Left colon (tissue), 2 donors: ENCODE measurements at regions of chr5 and their contacts with region 1.

Region 1: DNA sequence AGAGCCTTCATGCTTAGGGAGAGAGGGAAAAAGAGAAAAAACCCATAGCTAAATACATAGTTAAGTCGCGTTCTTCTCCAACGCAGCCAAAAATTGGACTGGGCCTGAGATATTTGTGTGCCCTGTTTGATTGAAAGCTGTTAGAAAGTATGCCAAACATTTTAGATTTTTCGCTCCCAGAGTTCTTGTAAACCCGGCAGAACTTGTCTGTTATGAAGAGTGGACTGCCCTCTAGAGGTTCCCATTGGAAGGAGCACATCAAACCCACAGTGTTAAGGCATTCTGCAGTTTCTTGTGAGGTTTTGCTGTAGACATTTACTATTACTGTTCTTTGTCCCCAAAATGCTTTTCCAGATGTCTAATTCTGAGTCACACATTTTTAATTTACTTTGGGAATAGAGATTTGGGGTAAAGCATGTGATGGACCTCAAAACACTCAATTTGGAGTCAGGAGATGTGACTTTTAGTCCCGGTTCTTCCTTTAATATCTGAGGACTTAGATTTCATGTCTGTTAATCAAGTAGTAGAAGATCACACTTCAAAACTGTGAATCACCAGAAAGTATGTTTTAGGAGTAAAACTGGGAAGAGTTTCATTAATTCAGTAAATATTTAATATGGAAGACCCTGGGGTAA is 96.6 kb downstream of the PCSK1 start:
- DNase-seq: peak; percentile 64 to 74
- ATAC-seq: peak; percentile 70

Region 2: DNA sequence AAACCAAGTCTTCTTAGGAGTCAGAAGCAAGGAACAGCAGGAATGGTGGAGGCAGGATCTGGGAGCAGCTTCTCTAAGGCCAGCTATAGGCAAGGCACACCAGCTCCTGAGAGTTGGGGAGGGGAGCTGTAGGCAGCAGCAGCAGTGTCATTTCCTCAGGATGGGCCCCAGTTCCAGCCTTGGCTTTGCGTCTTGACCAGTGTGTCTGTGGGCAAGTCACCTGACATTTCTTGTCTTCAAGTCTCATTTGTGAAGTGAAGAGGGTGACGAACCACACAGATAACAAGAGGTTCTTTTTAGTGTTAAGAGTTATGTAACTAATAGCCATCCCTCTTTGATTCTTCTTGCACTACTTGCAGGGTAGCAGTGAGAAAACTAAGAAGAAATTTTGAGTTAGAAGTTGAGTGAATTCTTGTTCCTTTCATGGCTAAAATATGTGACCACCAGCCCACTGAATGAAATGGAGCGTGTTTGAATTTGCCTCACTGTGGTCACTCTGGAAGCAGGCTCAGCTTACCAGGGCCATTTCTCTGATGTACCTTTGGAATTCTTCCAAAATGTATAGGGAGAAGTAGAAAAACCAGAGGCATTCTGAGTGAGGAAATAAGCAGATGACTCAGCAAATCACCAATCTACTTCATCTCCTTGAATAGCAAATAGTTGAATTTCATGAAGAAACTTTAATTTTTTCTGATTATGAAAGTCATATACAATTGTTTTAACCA is 563.0 kb before region 1 on chr5:
- intact Hi-C with region 1: loop called in 1 of 2 experiments (anchors 10 kb)
- DNase-seq: no peak
- ATAC-seq: no peak